B cell (primary cell): ENCODE measurements at regions of chr17 and their contacts with region 1.

Region 1: DNA sequence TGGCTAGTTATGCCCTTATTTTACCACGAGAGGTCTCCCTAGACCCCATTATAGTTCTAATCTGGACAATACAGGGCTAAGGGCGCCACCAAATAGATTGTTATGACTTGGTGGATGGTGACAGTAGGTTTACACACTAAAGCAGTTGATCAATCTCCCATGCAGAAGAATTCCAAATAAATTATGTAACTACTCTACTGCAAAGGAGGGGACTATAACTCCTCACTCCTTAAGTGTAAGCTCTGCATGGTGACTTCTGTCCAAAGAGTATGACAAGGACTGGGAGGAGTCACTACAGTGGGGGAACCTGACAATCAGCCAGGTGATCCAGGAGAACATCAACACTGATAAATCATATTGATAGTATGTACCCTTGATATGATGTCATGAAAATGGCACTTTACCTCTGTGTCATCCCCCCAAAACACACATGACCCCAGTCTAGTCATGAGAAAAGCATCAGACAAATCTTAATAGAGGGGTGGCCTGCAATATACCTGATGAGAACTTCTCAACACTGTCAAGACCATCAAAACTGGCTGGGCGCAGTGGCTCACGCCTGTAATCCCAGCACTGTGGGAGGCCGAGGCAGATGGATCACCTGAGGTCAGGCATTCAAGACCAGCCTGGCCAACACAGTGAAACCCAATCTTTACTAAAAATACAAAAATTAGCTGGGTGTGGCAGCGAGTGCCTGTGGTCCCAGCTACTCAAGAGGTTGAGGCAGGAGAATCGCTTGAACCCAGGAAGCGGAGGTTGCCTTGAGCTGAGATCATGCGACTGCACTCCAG is 20.1 kb upstream of the YPEL2 start:
- DNase-seq: peak; percentile 81
- ATAC-seq: peak; percentile 98
- H3K4me3 ChIP-seq: no peak overlapping the region
- H3K4me3 Mint-ChIP-seq: no peak overlapping the region
- H3K27ac ChIP-seq: no peak overlapping the region
- H3K27ac Mint-ChIP-seq: no peak overlapping the region
- H3K4me1 ChIP-seq: peaks cover 0 to 2% of the 10 kb centered on the region in 2 donors
- H3K4me1 Mint-ChIP-seq: no peaks in the 10 kb centered on the region
- H3K27me3 ChIP-seq: no peaks in the 10 kb centered on the region
- H3K27me3 Mint-ChIP-seq: no peaks in the 10 kb centered on the region
- CTCF ChIP-seq: peak; percentile 92

Region 2: DNA sequence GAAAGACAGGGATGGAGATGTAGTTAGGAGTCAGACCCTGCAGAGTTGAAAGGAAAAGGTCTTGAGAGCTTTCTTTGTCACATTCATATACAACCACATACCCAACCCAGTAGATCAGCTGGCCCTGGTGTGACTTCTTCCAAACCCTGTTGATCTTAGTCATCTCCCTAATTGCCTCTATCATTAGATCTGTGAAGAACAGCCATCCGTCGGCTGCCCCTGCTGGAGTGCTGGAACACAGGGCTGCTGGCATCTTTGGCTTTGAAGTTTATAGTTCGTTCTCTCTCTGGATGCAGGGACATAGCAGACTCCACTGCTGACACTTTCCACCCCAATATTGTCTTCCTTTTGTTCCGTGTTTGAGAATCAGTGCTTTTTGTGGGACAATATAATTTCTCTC is 111.9 kb before region 1 on chr17:
- CTCF ChIA-PET with region 1: no interaction called
- POLR2A ChIA-PET with region 1: no interaction called
- intact Hi-C with region 1: no loop called
- DNase-seq: no peak
- ATAC-seq: no peak
- H3K4me3 ChIP-seq: no peak overlapping the region
- H3K4me3 Mint-ChIP-seq: no peak overlapping the region
- H3K27ac ChIP-seq: no peak overlapping the region
- H3K27ac Mint-ChIP-seq: no peak overlapping the region
- H3K4me1 ChIP-seq: no peaks in the 10 kb centered on the region
- H3K4me1 Mint-ChIP-seq: no peaks in the 10 kb centered on the region
- H3K27me3 ChIP-seq: no peaks in the 10 kb centered on the region
- H3K27me3 Mint-ChIP-seq: no peaks in the 10 kb centered on the region
- CTCF ChIP-seq: no peak

Region 3: DNA sequence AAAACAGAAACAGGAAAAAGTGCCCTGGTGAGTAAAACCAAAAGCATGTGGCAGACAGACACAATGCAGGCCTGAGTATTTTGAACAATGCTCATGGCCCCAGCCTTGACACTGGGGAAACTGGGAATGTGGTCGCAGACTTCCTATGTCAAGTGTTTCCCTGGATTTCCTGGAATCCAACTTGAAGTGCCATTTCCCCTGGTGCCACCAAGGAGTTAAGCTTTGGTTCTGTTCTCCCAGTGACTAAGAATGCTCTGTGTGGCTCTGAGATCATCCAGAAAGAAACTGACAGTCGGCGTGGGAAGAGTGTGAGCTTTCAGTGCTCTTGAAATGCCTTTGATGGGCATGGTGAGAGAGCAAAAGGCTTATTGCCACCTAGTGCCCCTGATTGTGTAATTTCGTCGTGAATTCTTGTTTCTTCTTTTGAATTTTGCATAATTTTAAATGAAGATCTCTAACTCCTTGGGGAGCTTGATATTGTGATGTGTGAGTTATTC is 116.1 kb after region 1 on chr17:
- CTCF ChIA-PET with region 1: interaction called, 12 read pairs
- POLR2A ChIA-PET with region 1: no interaction called
- intact Hi-C with region 1: no loop called
- DNase-seq: no peak
- ATAC-seq: no peak
- H3K4me3 ChIP-seq: no peak overlapping the region
- H3K4me3 Mint-ChIP-seq: no peak overlapping the region
- H3K27ac ChIP-seq: no peak overlapping the region
- H3K27ac Mint-ChIP-seq: no peak overlapping the region
- H3K4me1 ChIP-seq: no peaks in the 10 kb centered on the region
- H3K4me1 Mint-ChIP-seq: peaks cover 2% of the 10 kb centered on the region
- H3K27me3 ChIP-seq: no peaks in the 10 kb centered on the region
- H3K27me3 Mint-ChIP-seq: peaks cover 3% of the 10 kb centered on the region
- CTCF ChIP-seq: no peak

Region 4: GRCh38 chr17:59521204-59522126 is 210.1 kb after region 1 on chr17:
- CTCF ChIA-PET with region 1: interaction called, 18 read pairs
- POLR2A ChIA-PET with region 1: no interaction called
- intact Hi-C with region 1: loop called (anchors 1 kb)
- DNase-seq: peak; percentile 76
- ATAC-seq: peak; percentile 53
- H3K4me3 ChIP-seq: no peak overlapping the region
- H3K4me3 Mint-ChIP-seq: no peak overlapping the region
- H3K27ac ChIP-seq: no peak overlapping the region
- H3K27ac Mint-ChIP-seq: no peak overlapping the region
- H3K4me1 ChIP-seq: peaks cover 0 to 2% of the 10 kb centered on the region in 2 donors
- H3K4me1 Mint-ChIP-seq: peaks cover 4% of the 10 kb centered on the region
- H3K27me3 ChIP-seq: peaks cover 0 to 2% (median 0%) of the 10 kb centered on the region in 4 experiments
- H3K27me3 Mint-ChIP-seq: peaks cover 28% of the 10 kb centered on the region
- CTCF ChIP-seq: peak; percentile 93